CD8-positive, alpha-beta T cell (primary cell): ENCODE measurements at regions of chr1 and their contacts with region 1.

Region 1: DNA sequence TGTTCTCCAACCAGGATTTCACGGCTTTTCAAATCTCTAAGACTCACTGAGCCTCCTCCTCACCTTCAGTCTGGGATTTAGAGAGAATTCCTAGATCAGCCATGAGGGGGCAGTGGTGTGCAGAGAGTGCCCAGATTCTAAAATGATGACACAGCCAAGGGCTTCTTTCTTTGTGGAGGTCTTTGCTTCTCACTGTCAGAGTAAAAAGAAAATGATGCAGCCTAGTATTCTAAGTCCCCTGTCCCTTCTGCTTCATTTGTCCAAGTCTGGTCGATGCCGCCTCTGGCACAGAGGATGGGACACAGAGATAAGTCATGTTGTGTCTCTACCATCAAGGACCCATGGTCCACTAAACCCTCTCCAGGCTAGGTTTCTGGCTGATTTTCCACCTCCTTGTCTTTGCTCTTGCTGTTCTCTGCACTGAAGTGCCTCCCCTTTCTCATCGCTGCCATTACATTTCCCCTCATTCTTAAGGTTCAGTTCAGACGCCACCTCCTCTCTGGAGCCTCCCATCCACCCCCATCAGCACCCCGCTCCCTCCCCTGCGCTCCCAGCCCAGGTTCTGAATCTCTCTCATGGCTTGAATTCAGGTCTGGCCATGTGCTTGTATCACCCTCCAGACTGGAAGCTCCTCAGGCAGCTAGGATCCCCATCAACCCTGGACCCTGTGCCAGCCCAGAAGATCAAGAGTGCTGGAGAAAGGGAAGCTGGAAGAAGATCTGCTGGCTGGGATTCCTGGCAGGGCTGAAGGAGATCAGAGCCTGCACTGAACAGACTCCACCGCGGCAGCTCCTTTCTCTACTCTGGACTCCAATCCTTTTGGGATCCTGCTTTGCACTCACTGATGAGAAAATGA is 12.0 kb upstream of the TINAGL1 start:
- DNase-seq: peak in 7 of 9 experiments; percentile 26 to 64 (median 53)
- ATAC-seq: peak; percentile 66
- H3K4me3 ChIP-seq: no peak overlapping the region
- H3K4me3 Mint-ChIP-seq: no peak overlapping the region
- H3K27ac ChIP-seq: no peak overlapping the region
- H3K27ac Mint-ChIP-seq: no peak overlapping the region
- H3K4me1 ChIP-seq: no peaks in the 10 kb centered on the region
- H3K4me1 Mint-ChIP-seq: no peaks in the 10 kb centered on the region
- H3K27me3 ChIP-seq: no peaks in the 10 kb centered on the region
- H3K27me3 Mint-ChIP-seq: peaks cover 27% of the 10 kb centered on the region
- CTCF ChIP-seq: peak; percentile 76

Region 2: GRCh38 chr1:31593770-31594632 is 29.6 kb after region 1 on chr1:
- CTCF ChIA-PET with region 1: interaction called, 3 read pairs
- POLR2A ChIA-PET with region 1: no interaction called
- intact Hi-C with region 1: loop called (anchors 1 kb)
- DNase-seq: peak; percentile 24 to 75 (median 70)
- ATAC-seq: peak; percentile 91
- H3K4me3 ChIP-seq: no peak overlapping the region
- H3K4me3 Mint-ChIP-seq: no peak overlapping the region
- H3K27ac ChIP-seq: no peak overlapping the region
- H3K27ac Mint-ChIP-seq: no peak overlapping the region
- H3K4me1 ChIP-seq: no peaks in the 10 kb centered on the region
- H3K4me1 Mint-ChIP-seq: no peaks in the 10 kb centered on the region
- H3K27me3 ChIP-seq: peaks cover 0 to 5% of the 10 kb centered on the region in 2 experiments
- H3K27me3 Mint-ChIP-seq: peaks cover 21% of the 10 kb centered on the region
- CTCF ChIP-seq: peak; percentile 73

Region 3: DNA sequence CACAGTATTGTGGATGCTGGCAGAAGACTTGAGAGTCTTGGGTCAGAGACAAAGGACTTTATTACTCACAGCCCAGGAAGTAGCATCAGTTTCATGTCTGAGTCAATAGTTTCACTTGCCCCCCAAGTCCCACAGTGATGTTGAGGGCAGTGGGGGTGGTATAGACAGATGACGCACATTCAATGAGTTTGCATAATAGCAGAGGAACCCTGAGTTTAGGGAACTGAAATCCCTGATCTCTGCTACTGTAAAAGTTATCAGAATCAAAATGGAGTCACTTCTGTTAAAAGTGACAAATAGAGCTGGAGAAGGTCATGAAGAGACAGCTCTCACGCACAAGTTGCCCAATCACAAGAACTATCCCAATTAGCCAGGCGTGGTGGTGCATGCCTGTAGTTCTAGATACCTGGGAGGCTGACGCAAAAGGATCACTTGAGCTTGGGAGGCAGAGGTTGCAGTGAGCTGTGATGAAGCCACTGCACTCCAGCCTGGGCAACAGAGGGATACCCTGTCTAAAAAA is 41.6 kb after region 1 on chr1:
- CTCF ChIA-PET with region 1: no interaction called
- POLR2A ChIA-PET with region 1: no interaction called
- intact Hi-C with region 1: no loop called
- DNase-seq: peak in 1 of 9 experiments; percentile 33
- ATAC-seq: no peak
- H3K4me3 ChIP-seq: no peak overlapping the region
- H3K4me3 Mint-ChIP-seq: no peak overlapping the region
- H3K27ac ChIP-seq: no peak overlapping the region
- H3K27ac Mint-ChIP-seq: no peak overlapping the region
- H3K4me1 ChIP-seq: no peaks in the 10 kb centered on the region
- H3K4me1 Mint-ChIP-seq: no peaks in the 10 kb centered on the region
- H3K27me3 ChIP-seq: no peaks in the 10 kb centered on the region
- H3K27me3 Mint-ChIP-seq: peaks cover 10% of the 10 kb centered on the region
- CTCF ChIP-seq: no peak

Region 4: GRCh38 chr1:31617917-31618660 is 53.7 kb after region 1 on chr1:
- CTCF ChIA-PET with region 1: interaction called, 14 read pairs
- POLR2A ChIA-PET with region 1: no interaction called
- intact Hi-C with region 1: no loop called
- DNase-seq: peak; percentile 19 to 64 (median 44)
- ATAC-seq: peak; percentile 83
- H3K4me3 ChIP-seq: peak overlapping the region; percentile 26 to 46
- H3K4me3 Mint-ChIP-seq: peak overlapping the region; percentile 56
- H3K27ac ChIP-seq: no peak overlapping the region
- H3K27ac Mint-ChIP-seq: no peak overlapping the region
- H3K4me1 ChIP-seq: no peaks in the 10 kb centered on the region
- H3K4me1 Mint-ChIP-seq: peaks cover 6% of the 10 kb centered on the region
- H3K27me3 ChIP-seq: peaks cover 14 to 20% of the 10 kb centered on the region in 2 experiments
- H3K27me3 Mint-ChIP-seq: peaks cover 30% of the 10 kb centered on the region
- CTCF ChIP-seq: peak; percentile 80

Region 5: GRCh38 chr1:31762726-31763670 is 198.6 kb after region 1 on chr1:
- CTCF ChIA-PET with region 1: no interaction called
- POLR2A ChIA-PET with region 1: no interaction called
- intact Hi-C with region 1: loop called in 1 of 2 experiments (anchors 1 kb)
- DNase-seq: peak; percentile 39 to 86 (median 69)
- ATAC-seq: peak; percentile 43
- H3K4me3 ChIP-seq: peak overlapping the region; percentile 41 to 57
- H3K4me3 Mint-ChIP-seq: peak overlapping the region; percentile 80
- H3K27ac ChIP-seq: no peak overlapping the region
- H3K27ac Mint-ChIP-seq: no peak overlapping the region
- H3K4me1 ChIP-seq: peaks cover 40% of the 10 kb centered on the region
- H3K4me1 Mint-ChIP-seq: peaks cover 29% of the 10 kb centered on the region
- H3K27me3 ChIP-seq: peaks cover 11 to 14% of the 10 kb centered on the region in 2 experiments
- H3K27me3 Mint-ChIP-seq: peaks cover 11% of the 10 kb centered on the region
- CTCF ChIP-seq: peak; percentile 45